Sciatic nerve (tissue), 2 donors: ENCODE measurements at regions of chr2 and their contacts with region 1.

Region 1: GRCh38 chr2:163213661-163214389 is 375.3 kb upstream of the KCNH7 start:
- DNase-seq: no peak
- ATAC-seq: peak; percentile 41

Region 2: DNA sequence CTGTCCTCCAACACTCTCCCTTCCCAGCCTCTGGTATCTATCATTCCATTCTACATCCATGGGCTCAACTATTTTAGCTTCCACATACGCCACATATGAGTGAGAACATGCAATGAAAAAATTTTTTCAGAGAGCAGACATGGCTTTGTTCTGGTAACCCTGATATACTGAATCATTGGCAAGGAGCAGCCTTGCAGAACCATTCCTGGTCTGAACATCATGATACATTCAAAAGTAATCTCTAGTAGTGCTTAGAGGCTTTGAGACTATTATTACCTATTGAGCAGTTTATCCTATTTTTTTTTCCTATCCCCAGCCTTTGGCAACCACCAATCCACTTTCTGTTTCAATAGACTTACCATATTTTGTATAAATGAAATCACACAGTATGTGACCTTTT is 17.8 kb after region 1 on chr2:
- intact Hi-C with region 1: loop called (anchors 2 kb)
- DNase-seq: no peak
- ATAC-seq: no peak

Region 3: GRCh38 chr2:163389838-163390237 is 176.0 kb after region 1 on chr2:
- intact Hi-C with region 1: no loop called
- DNase-seq: no peak
- ATAC-seq: no peak